A673 (cell line): ENCODE measurements at regions of chr15 and their contacts with region 1.

Region 1: DNA sequence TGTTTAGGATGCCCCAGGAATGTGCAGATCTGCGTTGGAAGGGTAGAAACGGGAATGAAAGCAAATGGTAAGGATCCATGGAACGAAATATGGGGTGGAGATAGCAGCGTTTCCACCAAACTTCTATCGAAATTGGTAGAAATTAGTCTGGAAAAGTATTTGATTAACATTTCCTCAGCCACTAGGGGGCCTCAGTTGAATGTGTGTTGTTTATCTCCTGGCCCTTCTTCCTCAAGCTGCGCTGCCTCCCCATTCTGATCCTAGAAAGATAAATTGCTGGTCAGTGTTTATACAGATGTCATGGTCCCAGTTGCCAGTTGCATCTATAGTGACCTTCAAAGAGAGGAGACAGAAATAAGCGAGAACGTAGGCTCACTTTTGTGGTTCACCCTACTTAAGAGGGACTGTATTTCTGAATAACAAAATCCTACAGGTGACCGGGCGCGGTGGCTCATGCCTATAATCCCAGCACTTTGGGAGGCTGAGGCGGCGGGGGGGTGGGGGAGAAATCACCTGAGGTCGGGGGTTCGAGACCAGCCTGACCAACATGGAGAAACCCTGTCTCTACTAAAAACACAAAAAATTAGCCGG is 457.1 kb downstream of the SQOR start:
- DNase-seq: peak; percentile 75
- H3K4me3 ChIP-seq: no peak overlapping the region
- H3K27ac ChIP-seq: no peak overlapping the region
- H3K4me1 ChIP-seq: peaks cover 19% of the 10 kb centered on the region
- H3K27me3 ChIP-seq: no peaks in the 10 kb centered on the region
- CTCF ChIP-seq: peak; percentile 77

Region 2: DNA sequence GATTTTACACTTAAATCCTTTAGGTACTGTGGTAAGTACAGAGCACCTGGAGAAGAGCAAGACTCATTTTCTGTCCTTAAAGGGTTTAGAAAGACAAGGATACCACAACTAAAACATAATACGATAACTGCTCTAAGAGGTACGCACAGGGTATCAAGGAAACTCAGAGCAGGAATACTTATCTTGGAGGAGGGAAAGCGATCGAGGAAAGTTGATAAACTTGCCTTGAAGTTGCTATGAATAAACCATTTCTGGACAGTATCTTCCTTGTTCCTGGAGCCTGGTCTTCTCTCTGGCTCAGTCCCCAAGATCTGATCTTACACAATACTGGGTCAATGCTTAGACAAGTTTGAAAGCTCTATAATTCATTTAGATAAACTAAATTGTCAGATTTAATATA is 696.0 kb before region 1 on chr15:
- CTCF ChIA-PET with region 1: interaction called, 14 read pairs
- POLR2A ChIA-PET with region 1: no interaction called
- intact Hi-C with region 1: no loop called
- DNase-seq: no peak
- H3K4me3 ChIP-seq: no peak overlapping the region
- H3K27ac ChIP-seq: no peak overlapping the region
- H3K4me1 ChIP-seq: peaks cover 2% of the 10 kb centered on the region
- H3K27me3 ChIP-seq: peaks cover 37% of the 10 kb centered on the region
- CTCF ChIP-seq: no peak

Region 3: DNA sequence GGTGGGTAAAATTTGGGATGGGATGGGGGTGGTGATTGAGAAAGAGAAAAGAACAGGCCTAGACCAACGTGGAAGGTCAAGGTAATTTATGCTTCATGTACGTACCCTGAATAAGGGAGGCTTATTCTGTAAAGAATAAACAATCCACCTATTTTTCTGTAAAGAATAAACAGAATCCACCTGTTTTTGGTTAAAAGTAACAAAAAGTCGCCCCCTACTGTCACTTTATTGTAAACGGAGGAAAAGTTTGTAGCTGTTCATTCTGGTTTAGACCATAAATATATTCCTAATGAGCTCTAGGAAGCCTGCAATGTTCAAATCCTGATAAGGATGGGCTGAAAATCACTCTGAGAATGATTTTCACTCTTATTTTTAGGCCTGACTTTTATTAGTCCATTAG is 480.6 kb before region 1 on chr15:
- CTCF ChIA-PET with region 1: no interaction called
- POLR2A ChIA-PET with region 1: no interaction called
- intact Hi-C with region 1: no loop called
- DNase-seq: peak; percentile 40
- H3K4me3 ChIP-seq: no peak overlapping the region
- H3K27ac ChIP-seq: no peak overlapping the region
- H3K4me1 ChIP-seq: no peaks in the 10 kb centered on the region
- H3K27me3 ChIP-seq: no peaks in the 10 kb centered on the region
- CTCF ChIP-seq: peak; percentile 62

Region 4: GRCh38 chr15:45795440-45796069 is 296.4 kb before region 1 on chr15:
- CTCF ChIA-PET with region 1: no interaction called
- POLR2A ChIA-PET with region 1: no interaction called
- intact Hi-C with region 1: loop called (anchors 5 kb)
- DNase-seq: peak; percentile 62
- H3K4me3 ChIP-seq: no peak overlapping the region
- H3K27ac ChIP-seq: no peak overlapping the region
- H3K4me1 ChIP-seq: no peaks in the 10 kb centered on the region
- H3K27me3 ChIP-seq: no peaks in the 10 kb centered on the region
- CTCF ChIP-seq: peak; percentile 80

Region 5: GRCh38 chr15:45919806-45920205 is 172.1 kb before region 1 on chr15:
- CTCF ChIA-PET with region 1: no interaction called
- POLR2A ChIA-PET with region 1: no interaction called
- intact Hi-C with region 1: no loop called
- DNase-seq: peak; percentile 26
- H3K4me3 ChIP-seq: no peak overlapping the region
- H3K27ac ChIP-seq: no peak overlapping the region
- H3K4me1 ChIP-seq: no peaks in the 10 kb centered on the region
- H3K27me3 ChIP-seq: no peaks in the 10 kb centered on the region
- CTCF ChIP-seq: no peak

Region 6: DNA sequence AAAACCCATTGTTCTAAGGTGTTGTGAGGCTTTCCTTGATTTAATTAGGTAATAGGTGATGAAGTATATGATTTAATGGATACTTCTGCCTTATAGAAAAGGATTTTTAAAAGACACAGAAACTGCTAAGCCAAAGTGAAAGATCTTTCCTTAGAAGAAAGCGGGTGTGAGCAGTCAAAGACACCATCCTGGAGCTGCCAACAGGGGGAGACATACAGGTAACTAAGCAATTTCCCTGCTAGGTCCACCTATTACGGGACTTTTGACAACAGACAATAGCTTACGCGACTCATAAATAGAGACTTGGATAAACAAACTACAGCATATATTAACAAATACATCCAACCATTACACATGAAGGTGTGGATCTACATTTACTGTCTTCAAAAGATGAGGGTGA is 212.4 kb after region 1 on chr15:
- CTCF ChIA-PET with region 1: no interaction called
- POLR2A ChIA-PET with region 1: no interaction called
- intact Hi-C with region 1: loop called (anchors 5 kb)
- DNase-seq: peak; percentile 55
- H3K4me3 ChIP-seq: no peak overlapping the region
- H3K27ac ChIP-seq: no peak overlapping the region
- H3K4me1 ChIP-seq: no peaks in the 10 kb centered on the region
- H3K27me3 ChIP-seq: no peaks in the 10 kb centered on the region
- CTCF ChIP-seq: peak; percentile 89

Region 7: DNA sequence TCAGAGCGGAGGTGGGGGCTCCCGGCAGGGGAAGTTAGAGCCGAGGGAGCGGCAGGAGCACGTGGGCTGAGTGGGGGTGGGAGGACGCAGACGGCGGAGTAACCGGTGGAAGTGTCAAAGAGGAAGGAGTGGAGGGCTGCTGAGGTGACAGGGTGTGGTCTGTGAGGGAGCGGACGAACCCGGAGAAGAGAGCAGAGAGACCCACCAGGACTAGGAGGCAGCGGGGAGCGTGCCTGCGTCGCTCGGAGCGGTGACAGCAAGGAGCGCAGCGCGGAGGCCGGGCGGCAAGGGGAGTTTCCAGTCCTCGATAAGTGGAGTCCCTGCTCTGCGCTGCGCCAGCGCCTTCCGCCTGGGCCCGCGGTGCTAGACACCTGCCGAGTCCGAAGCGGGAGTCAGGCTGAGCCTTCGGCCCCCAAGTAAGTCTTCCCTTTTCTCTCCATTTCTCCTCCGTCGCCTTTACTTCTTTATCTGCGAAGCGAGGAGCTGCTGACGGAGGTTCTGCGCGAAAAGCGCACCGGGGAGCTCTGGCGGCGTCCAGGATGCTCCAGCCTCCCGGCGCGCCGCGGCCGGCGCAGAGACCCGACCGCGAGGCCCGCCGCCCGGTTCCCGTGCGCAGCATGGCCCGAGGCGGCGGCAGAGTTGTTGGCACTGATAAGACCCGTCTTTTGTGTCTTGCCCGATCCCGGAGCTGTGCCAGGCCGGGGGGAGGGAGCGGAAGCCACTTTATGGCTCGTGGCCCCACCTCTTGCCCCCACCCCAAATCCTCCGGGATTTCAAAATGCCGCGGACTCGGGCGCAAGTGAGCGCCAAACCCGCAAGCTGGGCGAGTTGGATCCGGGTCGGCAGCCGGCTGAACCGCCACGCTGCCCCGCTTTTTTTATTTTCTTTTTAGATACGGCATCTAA is 1092.3 kb after region 1 on chr15:
- CTCF ChIA-PET with region 1: no interaction called
- POLR2A ChIA-PET with region 1: no interaction called
- intact Hi-C with region 1: loop called (anchors 10 kb)
- DNase-seq: peak; percentile 75
- H3K4me3 ChIP-seq: peak overlapping the region; percentile 82
- H3K27ac ChIP-seq: peak overlapping the region; percentile 72
- H3K4me1 ChIP-seq: peaks cover 23% of the 10 kb centered on the region
- H3K27me3 ChIP-seq: no peaks in the 10 kb centered on the region
- CTCF ChIP-seq: no peak